Colonic mucosa (tissue), 4 donors: ENCODE measurements at regions of chr10 and their contacts with region 1.

Region 1: GRCh38 chr10:78657163-78657861 is 411.5 kb upstream of the ZMIZ1 start:
- DNase-seq: peak; percentile 89
- H3K4me3 ChIP-seq: no peak overlapping the region
- H3K27ac ChIP-seq: no peak overlapping the region
- H3K4me1 ChIP-seq: no peaks in the 10 kb centered on the region
- H3K27me3 ChIP-seq: no peaks in the 10 kb centered on the region
- CTCF ChIP-seq: peak; percentile 60

Region 2: GRCh38 chr10:78424719-78425118 is 232.6 kb before region 1 on chr10:
- intact Hi-C with region 1: loop called (anchors 10 kb)
- DNase-seq: no peak
- H3K4me3 ChIP-seq: no peak overlapping the region
- H3K27ac ChIP-seq: no peak overlapping the region
- H3K4me1 ChIP-seq: no peaks in the 10 kb centered on the region
- H3K27me3 ChIP-seq: no peaks in the 10 kb centered on the region
- CTCF ChIP-seq: peak; percentile 40

Region 3: GRCh38 chr10:78712147-78712546 is 54.8 kb after region 1 on chr10:
- intact Hi-C with region 1: no loop called
- DNase-seq: peak; percentile 25
- H3K4me3 ChIP-seq: no peak overlapping the region
- H3K27ac ChIP-seq: no peak overlapping the region
- H3K4me1 ChIP-seq: no peaks in the 10 kb centered on the region
- H3K27me3 ChIP-seq: no peaks in the 10 kb centered on the region
- CTCF ChIP-seq: no peak

Region 4: DNA sequence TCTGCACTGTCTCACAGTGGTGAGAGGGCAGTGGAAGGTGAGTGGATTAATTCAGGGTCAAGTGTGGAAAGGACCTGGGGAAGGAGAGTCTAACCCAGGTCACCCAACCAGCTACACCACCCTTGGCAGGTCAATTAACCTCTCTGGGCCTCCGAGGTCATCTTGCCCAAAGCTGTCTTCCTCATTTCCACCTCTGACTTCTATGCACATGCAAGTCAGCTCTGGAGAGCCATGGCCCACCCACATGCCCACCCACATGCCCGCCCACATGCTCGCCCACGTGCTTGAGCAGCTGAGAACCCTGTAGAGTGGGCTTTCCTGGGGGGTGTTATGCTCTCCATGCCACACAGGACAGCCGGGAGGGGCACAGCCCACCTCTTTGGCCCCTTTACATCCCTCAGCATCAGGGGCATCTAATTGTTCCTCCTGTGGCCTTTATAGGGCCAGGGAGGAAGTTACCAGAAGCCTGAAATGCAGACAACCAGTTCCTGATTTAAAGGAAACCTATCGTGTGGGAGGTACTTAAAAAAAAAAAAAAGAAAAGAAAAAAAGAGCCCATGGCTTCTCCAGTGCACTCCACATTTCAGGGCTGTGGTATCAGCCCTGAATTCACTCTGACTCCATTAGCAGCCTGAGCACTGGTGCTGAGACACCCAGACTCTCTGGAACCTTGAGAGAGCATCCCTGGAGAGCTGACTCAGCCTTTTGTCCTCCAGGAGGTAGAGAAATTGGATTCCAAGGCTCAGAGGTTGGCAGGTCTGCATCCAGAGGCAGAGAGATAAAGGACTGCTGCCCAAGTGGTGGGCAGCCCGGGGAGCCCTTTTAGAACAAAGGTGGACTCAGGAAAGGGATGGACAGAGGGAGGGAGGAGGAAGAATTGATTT is 235.2 kb after region 1 on chr10:
- intact Hi-C with region 1: no loop called
- DNase-seq: peak; percentile 11
- H3K4me3 ChIP-seq: no peak overlapping the region
- H3K27ac ChIP-seq: no peak overlapping the region
- H3K4me1 ChIP-seq: no peaks in the 10 kb centered on the region
- H3K27me3 ChIP-seq: no peaks in the 10 kb centered on the region
- CTCF ChIP-seq: no peak

Region 5: DNA sequence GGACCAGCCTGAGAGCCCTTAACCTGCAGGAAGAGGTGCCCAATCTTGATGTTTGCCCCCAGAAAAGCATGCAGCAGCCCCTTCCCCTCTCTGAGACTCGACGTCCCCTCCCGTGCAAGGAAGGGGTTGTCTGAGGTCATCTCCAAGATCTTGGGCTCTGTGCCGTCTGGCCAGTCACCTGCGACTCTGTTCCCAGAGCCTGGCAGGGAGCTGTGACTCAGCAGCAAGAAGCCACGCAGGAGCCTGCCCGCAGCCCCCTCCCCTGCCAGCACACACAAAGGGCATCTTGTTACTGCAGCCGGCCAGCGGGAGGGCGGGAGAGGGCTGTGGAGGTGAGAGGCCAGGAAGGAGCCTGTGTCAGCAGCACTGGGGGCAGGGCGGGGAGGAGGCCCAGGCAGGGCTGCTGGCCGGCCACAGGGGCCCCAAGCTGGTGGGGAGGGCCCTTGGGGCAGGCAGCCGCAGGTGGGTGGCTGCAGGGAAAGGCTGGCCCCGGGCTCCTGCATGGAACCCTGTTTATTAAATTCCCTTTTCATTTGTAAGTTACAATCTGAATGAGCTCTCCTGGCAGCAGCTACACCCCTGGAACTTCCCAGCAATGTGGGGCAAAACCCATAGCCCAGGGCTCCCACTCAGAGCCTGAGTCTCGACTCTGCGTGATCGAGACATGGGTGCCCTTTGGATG is 307.8 kb after region 1 on chr10:
- intact Hi-C with region 1: no loop called
- DNase-seq: no peak
- H3K4me3 ChIP-seq: no peak overlapping the region
- H3K27ac ChIP-seq: no peak overlapping the region
- H3K4me1 ChIP-seq: no peaks in the 10 kb centered on the region
- H3K27me3 ChIP-seq: no peaks in the 10 kb centered on the region
- CTCF ChIP-seq: no peak